ENCODE measurements at regions of chr20 and their contacts with region 1.

Region 1: DNA sequence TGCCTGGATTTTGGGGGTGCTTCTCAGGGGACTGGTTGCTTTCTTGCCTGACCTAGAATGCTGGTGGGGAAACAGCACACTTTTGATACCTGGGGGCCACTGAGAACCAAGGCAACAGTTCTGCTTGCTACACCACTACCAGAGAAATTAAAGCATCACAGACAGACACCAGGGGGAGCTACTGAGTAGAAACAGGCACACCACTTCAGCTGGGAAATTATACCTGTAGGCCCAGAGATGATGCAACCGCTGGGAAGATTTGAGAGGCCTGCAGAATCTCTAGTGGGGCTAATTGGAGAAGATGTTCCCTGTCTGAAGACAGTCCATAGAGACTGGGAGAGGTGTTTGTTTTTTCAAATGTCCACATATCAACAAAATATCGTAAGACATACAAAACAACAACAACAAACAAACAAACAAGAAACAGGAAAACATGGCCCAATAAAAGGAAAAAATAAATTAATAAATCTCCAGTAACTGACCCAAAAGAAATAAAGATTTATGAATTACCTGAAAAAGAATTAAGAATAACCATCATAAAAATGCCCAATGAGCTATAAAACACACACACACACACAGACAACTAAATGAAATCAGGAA is 129.4 kb upstream of the RIN2 start:
- DNase-seq: peak; percentile 72
- ATAC-seq: peak; percentile 60
- H3K4me3 Mint-ChIP-seq: no peak overlapping the region
- H3K27ac Mint-ChIP-seq: peak overlapping the region; percentile 45
- H3K4me1 Mint-ChIP-seq: peaks cover 2% of the 10 kb centered on the region
- H3K27me3 Mint-ChIP-seq: peaks cover 9% of the 10 kb centered on the region

Region 2: DNA sequence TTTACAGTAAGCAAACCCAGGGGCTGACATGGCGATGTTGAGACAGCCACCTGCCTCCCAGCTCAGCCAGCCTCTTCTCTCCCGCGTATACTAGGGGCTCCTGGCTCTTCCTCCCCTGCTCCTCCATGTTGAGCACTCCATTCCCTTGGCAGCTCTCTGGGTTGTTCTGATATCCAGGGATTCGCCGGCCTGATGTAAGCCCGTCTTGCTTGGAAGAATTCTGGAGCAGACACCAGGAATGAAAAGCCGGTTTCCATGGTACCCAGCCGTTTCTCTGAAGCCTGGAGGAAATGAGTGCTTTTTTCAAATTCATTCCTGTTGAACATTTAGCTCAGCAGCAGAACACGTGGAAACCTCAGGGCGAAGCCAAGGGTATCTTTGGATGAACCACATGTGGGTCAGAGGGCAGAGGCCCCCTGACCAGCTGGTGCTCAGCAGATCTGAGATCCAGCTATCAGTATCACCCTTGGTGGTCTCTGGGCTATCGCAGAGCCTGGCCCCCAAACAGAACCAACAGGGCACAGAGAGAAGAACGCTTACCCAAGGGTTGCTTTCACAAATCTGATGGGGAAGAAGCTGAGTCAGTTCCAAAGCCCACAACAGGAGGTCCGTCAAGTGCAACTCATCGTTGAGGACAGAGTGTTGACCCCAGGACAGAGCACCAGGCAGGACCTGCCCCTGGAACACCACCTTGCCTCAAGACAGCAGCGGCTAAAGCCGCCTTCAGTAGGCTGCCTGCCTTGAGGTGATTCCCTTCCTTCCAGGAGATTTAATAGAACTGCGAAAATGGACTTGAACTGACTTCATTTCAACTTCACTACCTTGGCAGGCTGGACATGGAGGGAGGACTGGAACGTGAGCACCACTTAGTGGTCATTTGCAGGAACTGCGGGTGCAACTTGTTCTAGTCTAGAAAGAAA is 33.3 kb after region 1 on chr20:
- CTCF ChIA-PET with region 1: interaction called, 21 read pairs
- POLR2A ChIA-PET with region 1: no interaction called
- intact Hi-C with region 1: loop called (anchors 1 kb)
- DNase-seq: peak; percentile 69
- ATAC-seq: peak; percentile 47
- H3K4me3 Mint-ChIP-seq: no peak overlapping the region
- H3K27ac Mint-ChIP-seq: no peak overlapping the region
- H3K4me1 Mint-ChIP-seq: peaks cover 2% of the 10 kb centered on the region
- H3K27me3 Mint-ChIP-seq: peaks cover 25% of the 10 kb centered on the region

Region 3: DNA sequence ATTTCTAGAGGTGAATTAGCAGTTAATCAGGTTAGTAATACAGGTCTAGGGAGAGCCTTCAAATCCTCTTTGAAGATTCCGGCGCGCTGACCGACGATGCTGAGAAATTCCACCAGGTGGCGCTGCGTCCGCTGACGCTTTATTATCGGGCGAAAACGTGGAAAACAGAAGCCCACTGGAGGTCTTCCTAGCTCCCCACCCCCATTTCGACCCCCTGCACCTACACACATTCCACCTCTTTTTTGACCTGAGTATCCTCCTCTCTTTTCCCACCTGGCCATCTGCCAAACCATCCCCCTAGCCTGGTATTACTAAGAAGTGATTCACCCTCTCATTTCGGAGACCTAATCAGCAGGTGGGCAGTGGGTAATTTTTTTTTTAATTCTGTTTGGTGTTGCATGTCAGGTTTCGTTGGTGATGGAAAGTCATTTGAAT is 64.0 kb after region 1 on chr20:
- CTCF ChIA-PET with region 1: no interaction called
- POLR2A ChIA-PET with region 1: no interaction called
- intact Hi-C with region 1: no loop called
- DNase-seq: peak; percentile 68
- ATAC-seq: peak; percentile 42
- H3K4me3 Mint-ChIP-seq: no peak overlapping the region
- H3K27ac Mint-ChIP-seq: no peak overlapping the region
- H3K4me1 Mint-ChIP-seq: peaks cover 3% of the 10 kb centered on the region
- H3K27me3 Mint-ChIP-seq: peaks cover 22% of the 10 kb centered on the region

Region 4: DNA sequence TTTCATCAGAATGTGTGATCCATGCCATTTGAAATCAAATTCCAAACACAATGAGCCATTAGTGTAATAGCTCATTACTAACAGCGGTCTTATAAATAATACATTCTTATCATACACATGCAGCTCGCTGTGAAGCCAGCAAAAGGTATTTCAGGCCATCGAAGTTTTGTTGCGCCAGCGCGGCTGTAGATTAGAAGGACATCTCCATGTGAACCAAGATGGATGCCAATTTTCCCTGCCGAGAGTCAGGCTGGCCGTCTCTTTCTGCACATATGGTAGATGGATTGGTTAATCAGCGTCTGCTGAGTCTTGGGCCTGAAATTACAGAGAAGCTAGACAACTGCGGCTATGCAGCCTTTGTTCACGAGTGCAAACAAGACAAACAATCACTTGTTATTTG is 467.8 kb after region 1 on chr20:
- CTCF ChIA-PET with region 1: no interaction called
- POLR2A ChIA-PET with region 1: no interaction called
- intact Hi-C with region 1: no loop called
- DNase-seq: no peak
- ATAC-seq: no peak
- H3K4me3 Mint-ChIP-seq: no peak overlapping the region
- H3K27ac Mint-ChIP-seq: no peak overlapping the region
- H3K4me1 Mint-ChIP-seq: no peaks in the 10 kb centered on the region
- H3K27me3 Mint-ChIP-seq: peaks cover 11% of the 10 kb centered on the region

Measured in activated CD4-positive, alpha-beta T cell treated with anti-CD3 and anti-CD28 coated beads for 36 hours (primary cell).